Sigmoid colon (tissue), 7 donors: ENCODE measurements at regions of chr6 and their contacts with region 1.

Region 1: GRCh38 chr6:133748628-133749027 is 140.3 kb upstream of the TCF21 start:
- DNase-seq: no peak
- H3K4me3 ChIP-seq: no peak overlapping the region
- H3K27ac ChIP-seq: no peak overlapping the region
- H3K4me1 ChIP-seq: no peaks in the 10 kb centered on the region
- H3K27me3 ChIP-seq: no peaks in the 10 kb centered on the region
- CTCF ChIP-seq: no peak
- EP300 ChIP-seq: no peak
- POLR2A ChIP-seq: no peak

Region 2: DNA sequence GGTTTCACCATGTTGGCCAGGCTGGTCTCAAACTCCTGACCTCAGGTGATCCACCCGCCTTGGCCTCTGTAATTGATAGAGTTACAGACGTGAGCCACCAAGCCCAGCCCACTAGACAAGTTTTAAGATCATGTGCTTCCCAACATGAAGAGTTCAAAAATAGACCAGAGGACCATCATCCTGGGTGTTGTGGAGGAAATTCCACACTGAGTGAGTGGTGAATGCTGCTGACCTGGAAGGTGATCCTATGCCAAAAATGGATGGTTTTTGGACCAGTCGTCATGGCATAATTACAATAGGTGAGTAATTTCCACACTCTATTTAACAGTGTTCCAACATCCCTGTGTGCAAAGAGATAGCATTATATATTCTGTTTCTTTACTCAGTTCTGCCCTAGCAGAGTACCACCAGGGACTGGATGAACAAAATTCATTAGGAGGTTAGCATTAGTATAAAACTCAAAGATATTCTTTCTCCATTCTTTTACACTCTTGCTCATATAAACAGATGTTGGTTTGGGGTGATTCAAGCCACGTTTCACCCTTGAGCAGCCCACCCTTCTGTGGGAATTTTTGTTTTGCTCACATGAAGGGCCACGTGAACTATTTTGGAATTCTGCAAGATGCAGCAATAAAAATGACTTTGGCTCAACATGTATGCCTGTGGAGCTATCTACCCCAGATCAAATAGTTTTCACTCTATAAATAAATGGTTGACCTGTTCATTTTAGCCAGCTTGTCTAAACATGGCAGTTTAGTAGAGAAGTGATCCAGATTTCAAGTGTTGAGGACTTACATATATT is 65.9 kb before region 1 on chr6:
- intact Hi-C with region 1: no loop called
- DNase-seq: no peak
- H3K4me3 ChIP-seq: no peak overlapping the region
- H3K27ac ChIP-seq: no peak overlapping the region
- H3K4me1 ChIP-seq: peaks cover 0 to 25% (median 19%) of the 10 kb centered on the region in 4 donors
- H3K27me3 ChIP-seq: peaks cover 0 to 75% (median 9%) of the 10 kb centered on the region in 3 donors
- CTCF ChIP-seq: no peak
- EP300 ChIP-seq: no peak
- POLR2A ChIP-seq: no peak

Region 3: GRCh38 chr6:133707456-133707855 is 41.2 kb before region 1 on chr6:
- intact Hi-C with region 1: loop called (anchors 5 kb)
- DNase-seq: no peak
- H3K4me3 ChIP-seq: no peak overlapping the region
- H3K27ac ChIP-seq: no peak overlapping the region
- H3K4me1 ChIP-seq: no peaks in the 10 kb centered on the region
- H3K27me3 ChIP-seq: no peaks in the 10 kb centered on the region
- CTCF ChIP-seq: no peak
- EP300 ChIP-seq: no peak
- POLR2A ChIP-seq: no peak

Region 4: DNA sequence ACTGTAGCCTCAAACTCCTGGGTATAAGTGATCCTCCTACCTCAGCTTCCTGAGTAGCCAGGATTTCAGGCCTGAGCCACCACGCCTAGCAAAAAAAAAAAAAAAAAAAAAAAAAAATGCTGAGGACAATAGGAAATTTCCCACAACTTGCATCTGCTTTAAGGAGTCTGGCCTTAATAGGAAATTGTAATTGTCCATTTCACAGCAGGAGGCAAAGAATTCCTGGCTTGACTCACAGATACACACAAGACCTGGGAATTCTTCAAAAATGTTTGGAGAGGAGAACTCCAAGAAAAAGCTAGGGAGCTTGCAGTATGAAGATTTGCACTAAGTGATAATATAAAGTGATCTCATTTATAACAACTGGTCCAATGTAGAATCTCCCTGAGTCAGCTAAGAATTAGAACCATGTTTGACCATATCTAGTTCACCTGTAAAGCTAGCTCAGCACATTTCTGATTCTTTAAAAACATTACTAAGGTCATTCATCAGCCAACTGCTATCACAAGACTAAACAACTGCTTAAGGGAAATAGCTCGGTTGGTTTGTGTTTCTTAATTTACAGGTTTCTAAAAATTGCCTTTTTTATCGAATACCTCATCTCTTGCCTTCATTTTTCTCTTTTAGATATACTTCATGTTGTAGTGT is 384.0 kb after region 1 on chr6:
- intact Hi-C with region 1: no loop called
- DNase-seq: no peak
- H3K4me3 ChIP-seq: no peak overlapping the region
- H3K27ac ChIP-seq: no peak overlapping the region
- H3K4me1 ChIP-seq: no peaks in the 10 kb centered on the region
- H3K27me3 ChIP-seq: no peaks in the 10 kb centered on the region
- CTCF ChIP-seq: no peak
- EP300 ChIP-seq: no peak
- POLR2A ChIP-seq: no peak